ENCODE measurements at regions of chr17 and their contacts with region 1.

Region 1: GRCh38 chr17:9668517-9668916 is 23.2 kb downstream of the USP43 start:
- DNase-seq: no peak
- H3K4me3 ChIP-seq: no peak overlapping the region
- H3K27ac ChIP-seq: no peak overlapping the region
- H3K4me1 ChIP-seq: no peaks in the 10 kb centered on the region
- H3K27me3 ChIP-seq: no peaks in the 10 kb centered on the region
- CTCF ChIP-seq: no peak
- POLR2A ChIP-seq: no peak

Region 2: GRCh38 chr17:9606453-9606852 is 62.1 kb before region 1 on chr17:
- intact Hi-C with region 1: loop called in 1 of 2 experiments (anchors 10 kb)
- DNase-seq: no peak
- H3K4me3 ChIP-seq: no peak overlapping the region
- H3K27ac ChIP-seq: no peak overlapping the region
- H3K4me1 ChIP-seq: no peaks in the 10 kb centered on the region
- H3K27me3 ChIP-seq: no peaks in the 10 kb centered on the region
- CTCF ChIP-seq: no peak
- POLR2A ChIP-seq: no peak

Measured in adrenal gland (tissue), 19 donors.